GM10248 (cell line): ENCODE measurements at regions of chr13 and their contacts with region 1.

Region 1: DNA sequence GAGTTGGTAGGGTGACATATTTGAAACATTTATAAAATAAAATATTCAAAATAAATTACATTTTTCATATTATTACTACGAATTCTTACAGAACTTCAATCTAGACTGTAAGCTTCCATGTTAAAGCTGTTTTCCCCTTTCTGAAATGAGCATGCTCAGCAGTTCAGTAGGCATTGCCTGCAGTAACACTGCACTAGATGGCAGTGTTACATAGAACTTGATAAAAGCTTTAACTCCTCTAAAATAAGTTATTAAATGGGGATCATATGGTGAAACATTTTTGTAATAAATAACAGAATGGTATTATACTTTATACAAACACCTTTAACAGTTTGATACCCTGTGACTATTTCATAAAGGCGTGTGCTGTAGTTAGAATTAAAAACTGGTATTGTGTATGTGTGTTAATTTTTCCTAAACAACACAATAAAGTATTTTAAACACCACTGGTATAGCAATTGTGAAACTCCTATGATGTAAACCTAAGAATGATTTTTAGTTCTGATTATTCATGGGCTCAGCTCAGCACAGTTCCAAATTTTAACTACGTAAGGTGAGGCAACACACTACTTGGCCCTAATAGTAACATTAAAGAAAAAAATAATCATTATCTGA is 11.6 kb upstream of the GPR18 start:
- DNase-seq: peak; percentile 37
- CTCF ChIP-seq: peak; percentile 79

Region 2: GRCh38 chr13:98992355-98992754 is 277.4 kb before region 1 on chr13:
- CTCF ChIA-PET with region 1: no interaction called
- POLR2A ChIA-PET with region 1: no interaction called
- DNase-seq: no peak
- CTCF ChIP-seq: no peak

Region 3: DNA sequence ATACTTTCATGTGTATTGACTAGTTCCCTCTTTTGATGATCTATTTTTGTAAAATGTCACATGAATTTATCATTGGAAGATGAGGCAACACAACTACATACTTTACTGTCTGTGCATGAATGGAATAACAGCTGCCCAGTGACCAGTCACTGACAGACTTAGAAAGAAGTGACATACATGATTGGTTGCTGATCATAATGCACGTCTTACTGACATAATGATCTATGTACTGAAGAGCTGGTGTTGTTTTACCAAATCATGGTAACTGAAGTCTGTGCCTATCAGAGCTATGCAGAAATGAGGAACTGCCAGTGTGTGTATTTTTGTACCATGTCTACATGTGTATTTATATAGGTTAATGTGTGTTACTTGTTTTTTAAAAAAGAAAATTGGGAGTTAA is 38.0 kb before region 1 on chr13:
- CTCF ChIA-PET with region 1: interaction called, 11 read pairs
- POLR2A ChIA-PET with region 1: no interaction called
- DNase-seq: no peak
- CTCF ChIP-seq: no peak

Region 4: DNA sequence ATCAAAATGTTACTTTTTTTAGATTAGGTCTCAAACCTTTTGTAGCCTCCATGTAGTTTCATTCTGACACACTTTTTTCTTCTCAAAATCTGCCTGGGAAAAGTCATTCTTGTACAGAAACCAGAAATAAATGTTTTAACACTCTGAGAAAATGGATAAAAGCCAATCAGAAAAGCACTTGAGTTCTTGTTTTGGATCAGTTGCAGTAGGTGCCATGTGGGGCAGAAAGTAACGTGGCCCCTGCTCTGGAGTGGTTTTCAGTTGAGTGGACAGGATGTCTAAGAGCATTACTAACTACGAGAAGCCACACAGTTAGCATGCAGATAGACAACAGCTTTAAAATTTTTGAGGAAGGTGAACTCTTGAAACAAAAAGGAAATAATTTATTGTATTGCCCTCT is 18.4 kb after region 1 on chr13:
- CTCF ChIA-PET with region 1: interaction called, 85 read pairs
- POLR2A ChIA-PET with region 1: no interaction called
- DNase-seq: peak; percentile 66
- CTCF ChIP-seq: no peak

Region 5: GRCh38 chr13:99356158-99357091 is 86.7 kb after region 1 on chr13:
- CTCF ChIA-PET with region 1: interaction called, 19 read pairs
- POLR2A ChIA-PET with region 1: interaction called, 5 read pairs
- DNase-seq: peak; percentile 75
- CTCF ChIP-seq: no peak

Region 6: DNA sequence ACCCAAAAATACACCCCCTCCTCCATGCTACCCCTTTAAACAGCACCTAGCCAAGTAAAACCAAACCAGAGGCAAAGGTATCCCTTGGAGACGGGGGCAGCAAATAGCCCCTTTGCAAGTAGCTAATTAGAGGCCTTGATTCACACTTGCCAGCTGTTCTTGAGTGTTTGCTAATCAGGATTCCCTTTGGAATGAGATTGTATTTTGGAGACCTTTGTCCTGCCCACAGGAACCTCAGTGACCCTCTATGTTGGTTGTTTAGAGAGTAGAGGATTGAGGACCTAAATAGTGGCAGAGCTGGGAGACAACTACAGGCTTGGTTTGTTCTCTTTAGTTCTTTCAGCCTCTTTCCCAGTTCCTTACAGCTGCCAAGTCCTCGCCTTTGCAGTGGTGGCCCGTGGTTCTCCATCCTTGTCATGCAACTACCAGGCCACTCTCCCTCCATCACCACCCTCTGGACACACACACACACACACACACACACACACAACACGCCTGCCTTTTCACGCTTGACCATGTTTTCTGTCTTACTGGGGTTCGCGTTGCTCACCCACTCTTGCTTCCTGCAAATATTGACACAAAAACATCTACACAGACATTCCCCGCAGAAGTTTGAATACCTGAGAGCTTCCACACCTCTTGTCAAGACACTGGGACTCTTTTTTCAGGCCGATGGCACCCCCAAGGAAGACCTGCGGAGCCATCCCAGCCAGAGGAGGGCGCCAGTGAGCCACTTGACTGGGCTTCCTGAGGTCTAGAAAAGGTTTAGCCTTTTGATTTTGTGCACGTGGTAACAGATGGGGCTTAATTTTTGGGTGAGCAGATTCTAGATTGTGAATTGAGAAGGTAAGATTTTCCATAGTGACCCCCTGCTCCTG is 117.4 kb after region 1 on chr13:
- CTCF ChIA-PET with region 1: interaction called, 63 read pairs
- POLR2A ChIA-PET with region 1: interaction called, 4 read pairs
- DNase-seq: peak; percentile 84
- CTCF ChIP-seq: peak; percentile 93